CD4-positive, alpha-beta T cell (primary cell): ENCODE measurements at regions of chr6 and their contacts with region 1.

Region 1: GRCh38 chr6:227074-227782 is 65.1 kb upstream of the DUSP22 start:
- DNase-seq: no peak
- ATAC-seq: no peak
- H3K4me3 ChIP-seq: no peak overlapping the region
- H3K4me3 Mint-ChIP-seq: no peak overlapping the region
- H3K27ac ChIP-seq: no peak overlapping the region
- H3K27ac Mint-ChIP-seq: no peak overlapping the region
- H3K4me1 ChIP-seq: peaks cover 28% of the 10 kb centered on the region
- H3K4me1 Mint-ChIP-seq: peaks cover 27% of the 10 kb centered on the region
- H3K27me3 ChIP-seq: no peaks in the 10 kb centered on the region
- H3K27me3 Mint-ChIP-seq: no peaks in the 10 kb centered on the region
- CTCF ChIP-seq: no peak

Region 2: DNA sequence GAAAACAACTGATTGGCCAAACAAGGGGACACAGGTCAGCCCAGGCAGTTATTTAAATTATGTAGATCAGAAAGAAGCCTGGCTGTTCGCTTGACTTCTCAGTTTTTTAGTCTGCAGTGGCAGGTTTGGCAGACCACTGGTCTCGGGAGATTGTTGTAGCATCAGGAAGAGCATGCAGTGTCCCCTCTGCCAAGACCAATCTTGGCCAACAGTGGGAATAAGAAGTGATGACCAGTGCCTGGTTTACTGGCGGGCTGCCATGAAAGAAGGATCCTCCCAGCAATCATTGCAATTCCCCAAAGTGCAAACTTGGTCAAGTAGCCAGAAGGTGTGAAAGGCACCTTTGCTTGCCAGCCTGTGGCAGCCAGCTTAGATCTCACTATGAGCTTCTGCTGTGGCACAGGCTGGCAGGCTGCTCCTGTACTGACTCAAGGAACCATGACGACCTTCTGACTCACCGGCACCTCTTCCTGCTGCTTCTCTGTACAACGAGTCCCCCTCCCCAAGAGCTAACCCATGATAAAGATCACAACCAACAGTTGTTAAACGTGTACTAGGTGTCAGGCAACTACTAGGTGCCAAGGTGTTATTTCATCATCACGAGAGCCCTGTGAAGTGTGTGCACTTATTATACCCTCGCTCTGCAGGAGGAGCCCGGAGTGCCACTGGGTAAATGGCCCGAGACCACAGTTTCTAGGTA is 11.7 kb before region 1 on chr6:
- CTCF ChIA-PET with region 1: interaction called, 5 read pairs
- POLR2A ChIA-PET with region 1: interaction called, 4 read pairs
- intact Hi-C with region 1: loop called in 1 of 2 experiments (anchors 1 kb)
- DNase-seq: peak in 12 of 14 experiments; percentile 17 to 70 (median 48)
- ATAC-seq: peak; percentile 89
- H3K4me3 ChIP-seq: no peak overlapping the region
- H3K4me3 Mint-ChIP-seq: no peak overlapping the region
- H3K27ac ChIP-seq: no peak overlapping the region
- H3K27ac Mint-ChIP-seq: peak overlapping the region; percentile 16
- H3K4me1 ChIP-seq: peaks cover 7% of the 10 kb centered on the region
- H3K4me1 Mint-ChIP-seq: peaks cover 7% of the 10 kb centered on the region
- H3K27me3 ChIP-seq: no peaks in the 10 kb centered on the region
- H3K27me3 Mint-ChIP-seq: no peaks in the 10 kb centered on the region
- CTCF ChIP-seq: no peak

Region 3: GRCh38 chr6:328136-328670 is 101.0 kb after region 1 on chr6:
- CTCF ChIA-PET with region 1: no interaction called
- POLR2A ChIA-PET with region 1: no interaction called
- intact Hi-C with region 1: no loop called
- DNase-seq: peak in 1 of 14 experiments; percentile 37
- ATAC-seq: no peak
- H3K4me3 ChIP-seq: no peak overlapping the region
- H3K4me3 Mint-ChIP-seq: no peak overlapping the region
- H3K27ac ChIP-seq: no peak overlapping the region
- H3K27ac Mint-ChIP-seq: no peak overlapping the region
- H3K4me1 ChIP-seq: peaks cover 7% of the 10 kb centered on the region
- H3K4me1 Mint-ChIP-seq: no peaks in the 10 kb centered on the region
- H3K27me3 ChIP-seq: no peaks in the 10 kb centered on the region
- H3K27me3 Mint-ChIP-seq: no peaks in the 10 kb centered on the region
- CTCF ChIP-seq: no peak